ENCODE measurements at regions of chr16 and their contacts with region 1.

Region 1: GRCh38 chr16:2926650-2927646 is 15.2 kb downstream of the FLYWCH1 start:
- DNase-seq: peak; percentile 86
- H3K4me3 ChIP-seq: no peak overlapping the region
- H3K27ac ChIP-seq: no peak overlapping the region
- H3K4me1 ChIP-seq: peaks cover 4% of the 10 kb centered on the region
- CTCF ChIP-seq: peak; percentile 98

Region 2: DNA sequence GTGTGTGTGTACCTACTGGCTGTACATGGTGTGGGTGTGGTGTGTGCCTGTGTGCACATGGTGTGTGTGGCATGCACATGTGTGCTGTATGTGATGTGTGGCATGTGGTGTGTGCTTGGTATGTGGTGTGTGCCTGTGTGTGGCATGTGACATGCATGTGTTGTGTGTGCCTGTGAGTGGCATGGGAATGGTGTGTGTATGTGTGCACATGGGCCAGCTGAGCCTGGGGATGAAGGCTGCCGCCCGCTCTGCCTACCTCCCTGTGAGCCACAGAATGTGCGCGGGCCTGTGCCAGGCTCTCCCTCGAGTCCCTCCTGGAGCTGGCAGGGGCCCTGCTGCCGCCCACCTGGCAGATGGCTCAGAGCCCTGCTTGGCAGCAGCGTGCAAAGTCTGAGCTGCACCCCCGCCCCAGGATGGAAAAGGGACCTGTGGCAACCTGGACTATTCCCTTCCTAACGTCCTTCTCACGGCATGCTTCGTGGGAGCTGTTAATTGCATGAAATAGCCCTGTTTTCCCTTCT is 216.2 kb before region 1 on chr16:
- CTCF ChIA-PET with region 1: no interaction called
- POLR2A ChIA-PET with region 1: no interaction called
- intact Hi-C with region 1: no loop called
- DNase-seq: no peak
- H3K4me3 ChIP-seq: no peak overlapping the region
- H3K27ac ChIP-seq: no peak overlapping the region
- H3K4me1 ChIP-seq: no peaks in the 10 kb centered on the region
- CTCF ChIP-seq: no peak

Region 3: DNA sequence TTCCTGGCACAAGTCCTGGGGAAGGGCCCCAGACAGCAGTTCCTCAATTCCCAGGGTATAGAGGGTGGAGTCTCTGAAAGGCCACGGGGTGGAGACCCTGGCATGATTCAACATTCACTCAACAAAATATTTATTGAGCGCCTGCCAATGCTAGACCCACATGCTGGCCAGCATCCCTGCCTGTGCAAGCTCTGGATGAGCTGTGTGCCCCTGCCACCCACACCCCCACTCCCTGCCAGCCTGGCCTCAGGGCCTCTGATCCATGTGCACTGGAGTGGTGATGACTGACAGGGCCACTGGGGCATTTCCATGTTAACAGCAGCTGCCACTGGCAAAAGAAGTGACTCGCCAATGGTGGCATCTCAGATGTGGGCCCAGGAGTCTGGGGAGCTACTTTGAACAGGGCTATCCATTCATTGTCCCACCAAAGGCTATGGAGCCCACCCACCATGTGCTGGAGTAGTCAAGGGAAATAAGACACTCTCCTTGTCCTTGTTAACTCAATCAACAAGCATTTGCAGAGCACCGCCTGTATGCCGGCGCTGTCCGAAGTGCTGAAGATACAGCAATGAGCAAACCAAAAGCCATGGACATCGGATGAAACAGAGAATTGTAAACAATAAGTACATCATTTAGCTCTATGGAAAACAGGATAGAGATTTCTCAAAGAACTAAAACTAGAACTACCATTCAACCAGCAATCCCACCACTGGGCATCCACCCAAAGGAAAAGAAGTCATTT is 66.0 kb before region 1 on chr16:
- CTCF ChIA-PET with region 1: no interaction called
- POLR2A ChIA-PET with region 1: no interaction called
- intact Hi-C with region 1: no loop called
- DNase-seq: no peak
- H3K4me3 ChIP-seq: no peak overlapping the region
- H3K27ac ChIP-seq: no peak overlapping the region
- H3K4me1 ChIP-seq: no peaks in the 10 kb centered on the region
- CTCF ChIP-seq: no peak

Region 4: DNA sequence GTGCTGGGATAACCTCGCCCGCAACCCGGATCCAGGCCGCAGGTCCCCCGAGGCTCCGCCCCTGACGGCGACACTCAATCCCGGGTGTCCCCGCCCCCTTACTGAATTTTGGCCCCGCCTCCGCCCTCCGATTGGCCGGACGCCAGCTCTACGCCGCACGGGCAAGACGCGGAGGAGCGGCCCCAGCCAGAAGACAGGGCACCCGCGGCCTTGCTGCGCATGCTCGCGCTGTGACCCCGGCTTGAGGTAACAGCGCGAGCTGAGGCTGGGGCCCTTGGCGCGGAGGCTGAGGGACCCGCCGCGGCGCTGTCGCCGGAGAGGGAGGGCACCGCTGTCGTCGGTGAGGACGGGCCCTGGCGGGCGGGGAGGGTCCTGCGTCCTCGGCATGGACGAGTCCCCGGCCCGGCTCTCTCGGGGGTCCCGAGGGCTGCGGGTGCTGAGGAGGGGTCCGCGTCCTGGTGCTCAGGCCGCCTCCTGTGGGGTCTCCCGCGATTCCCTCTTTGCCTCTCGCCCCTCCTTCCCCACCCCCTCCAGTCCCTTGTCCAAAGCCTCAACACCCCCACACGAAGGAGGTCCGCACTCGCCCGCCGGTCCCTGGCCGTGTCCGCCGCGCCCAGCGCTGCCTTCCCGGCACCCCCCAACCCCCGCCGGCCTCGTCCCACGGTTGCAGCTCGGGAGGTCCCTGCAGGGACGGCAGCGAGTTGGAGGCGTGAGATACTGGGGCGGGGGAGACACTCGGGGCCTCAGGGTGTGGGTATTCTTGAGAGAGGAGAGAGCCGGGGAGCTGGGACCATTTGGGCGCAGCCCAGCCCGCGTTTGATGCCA is 43.7 kb before region 1 on chr16 and contains the start of gene FLYWCH2:
- CTCF ChIA-PET with region 1: no interaction called
- POLR2A ChIA-PET with region 1: no interaction called
- intact Hi-C with region 1: no loop called
- DNase-seq: peak; percentile 97
- H3K4me3 ChIP-seq: peak within 1 kb of the TSS; percentile 84
- H3K27ac ChIP-seq: peak within 1 kb of the TSS; percentile 52
- H3K4me1 ChIP-seq: peaks cover 7% of the 10 kb centered on the region
- CTCF ChIP-seq: no peak
- total RNA-seq, gene FLYWCH2: 38.7 and 44.9 TPM in 2 replicates

Region 5: GRCh38 chr16:2980227-2981086 is 53.5 kb after region 1 on chr16 and contains the start of gene PKMYT1:
- CTCF ChIA-PET with region 1: interaction called, 5 read pairs
- POLR2A ChIA-PET with region 1: no interaction called
- intact Hi-C with region 1: loop called (anchors 1 kb)
- DNase-seq: peak; percentile 94
- H3K4me3 ChIP-seq: peak within 1 kb of the TSS; percentile 80
- H3K27ac ChIP-seq: peak within 1 kb of the TSS; percentile 67
- H3K4me1 ChIP-seq: peaks cover 48% of the 10 kb centered on the region
- CTCF ChIP-seq: no peak
- total RNA-seq, gene PKMYT1: 80.2 and 104 TPM in 2 replicates

Measured in OCI-LY7 (cell line).